BJ (cell line): ENCODE measurements at regions of chr10 and their contacts with region 1.

Region 1: DNA sequence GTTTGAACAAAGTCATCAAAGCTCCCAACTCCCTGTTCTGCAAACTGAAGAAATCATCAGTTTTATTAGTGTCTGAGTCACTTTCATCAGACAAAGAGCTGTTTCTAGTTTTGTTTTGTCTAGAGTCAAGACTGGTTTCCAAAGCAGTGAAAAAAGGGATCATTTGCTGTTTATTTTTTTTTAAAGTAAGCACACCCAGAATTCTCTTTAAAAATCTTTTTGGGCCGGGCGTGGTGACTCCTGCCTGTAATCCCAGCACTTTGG is 972.0 kb upstream of the CELF2 start:
- DNase-seq: no peak
- H3K4me3 ChIP-seq: no peak overlapping the region
- H3K27me3 ChIP-seq: no peaks in the 10 kb centered on the region
- CTCF ChIP-seq: no peak

Region 2: GRCh38 chr10:10007957-10008356 is 37.7 kb before region 1 on chr10:
- CTCF ChIA-PET with region 1: no interaction called
- POLR2A ChIA-PET with region 1: interaction called, 10 read pairs
- DNase-seq: no peak
- H3K4me3 ChIP-seq: no peak overlapping the region
- H3K27me3 ChIP-seq: no peaks in the 10 kb centered on the region
- CTCF ChIP-seq: no peak